Mucosa of descending colon (tissue), 3 donors: ENCODE measurements at regions of chr6 and their contacts with region 1.

Region 1: GRCh38 chr6:125314019-125314581 is 12.3 kb upstream of the HDDC2 start:
- DNase-seq: peak in 2 of 3 donors; percentile 65 to 70
- ATAC-seq: peak; percentile 92
- H3K4me3 ChIP-seq: no peak overlapping the region
- H3K4me1 ChIP-seq: no peaks in the 10 kb centered on the region
- CTCF ChIP-seq: peak; percentile 44

Region 2: DNA sequence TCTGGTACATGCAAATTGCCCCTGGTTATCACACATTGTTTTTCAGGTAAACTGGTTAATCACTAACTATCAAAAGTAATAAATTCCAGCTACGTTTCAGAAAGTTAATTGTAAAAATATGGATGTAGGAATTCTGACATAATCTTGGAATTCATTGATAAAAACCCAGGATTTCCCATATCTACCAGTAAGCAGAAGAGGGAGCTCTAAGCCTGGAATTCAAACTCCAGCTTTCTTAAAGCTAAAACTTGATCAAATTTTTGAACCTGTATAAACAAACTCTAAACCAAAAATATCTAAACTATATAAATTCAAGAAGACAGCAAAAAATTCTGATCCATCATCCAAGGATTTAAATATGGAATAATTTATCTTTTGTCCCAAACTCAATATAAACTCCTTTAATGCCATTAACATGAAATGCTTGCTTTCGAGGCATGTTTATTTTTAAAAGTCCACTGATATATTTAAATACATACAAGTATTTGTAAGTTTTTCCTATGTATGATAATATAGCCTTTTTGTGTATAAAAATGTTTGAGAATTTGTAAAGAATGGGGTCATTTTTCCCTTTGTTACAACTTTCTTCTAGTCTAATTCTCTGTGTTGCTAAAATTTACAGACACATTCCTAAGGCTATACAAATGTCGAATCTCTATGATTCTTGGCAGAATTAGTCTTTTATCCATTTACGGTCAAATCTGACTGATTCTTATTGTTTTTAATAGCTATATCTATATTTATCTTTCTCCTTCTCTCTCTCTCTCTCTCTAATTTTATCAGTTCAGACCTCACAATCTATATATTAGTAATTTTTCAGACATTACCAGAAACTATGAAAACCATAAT is 443.3 kb before region 1 on chr6:
- intact Hi-C with region 1: no loop called
- DNase-seq: peak in 1 of 3 donors; percentile 8
- ATAC-seq: no peak
- H3K4me3 ChIP-seq: no peak overlapping the region
- H3K4me1 ChIP-seq: no peaks in the 10 kb centered on the region
- CTCF ChIP-seq: no peak

Region 3: GRCh38 chr6:125262016-125263013 is 51.8 kb before region 1 on chr6:
- intact Hi-C with region 1: no loop called
- DNase-seq: no peak
- ATAC-seq: no peak
- H3K4me3 ChIP-seq: no peak overlapping the region
- H3K4me1 ChIP-seq: no peaks in the 10 kb centered on the region
- CTCF ChIP-seq: no peak

Region 4: GRCh38 chr6:125765944-125766343 is 451.8 kb after region 1 on chr6:
- intact Hi-C with region 1: loop called (anchors 5 kb)
- DNase-seq: no peak
- ATAC-seq: no peak
- H3K4me3 ChIP-seq: no peak overlapping the region
- H3K4me1 ChIP-seq: no peaks in the 10 kb centered on the region
- CTCF ChIP-seq: no peak